A549 (cell line): ENCODE measurements at regions of chr1 and their contacts with region 1.

Region 1: GRCh38 chr1:154878371-154879022 is 8.4 kb upstream of the KCNN3 start:
- DNase-seq: peak; percentile 72 to 73
- ATAC-seq: peak; percentile 91 to 97
- H3K4me3 ChIP-seq: no peak overlapping the region
- H3K27ac ChIP-seq: peak overlapping the region; percentile 38 to 45; a peak in 1 of 6 replicates
- H3K4me1 ChIP-seq: peaks cover 17% of the 10 kb centered on the region
- CTCF ChIP-seq: peak; percentile 85
- EP300 ChIP-seq: no peak
- POLR2A ChIP-seq: no peak
- RAD21 ChIP-seq: peak; percentile 93

Region 2: GRCh38 chr1:154479764-154480421 is 398.6 kb before region 1 on chr1:
- CTCF ChIA-PET with region 1: interaction called, 22 read pairs
- POLR2A ChIA-PET with region 1: no interaction called
- DNase-seq: peak; percentile 86 to 93
- ATAC-seq: peak; percentile 95 to 99
- H3K4me3 ChIP-seq: no peak overlapping the region
- H3K27ac ChIP-seq: peak overlapping the region; percentile 48 to 67; a peak in 3 of 6 replicates
- H3K4me1 ChIP-seq: peaks cover 9% of the 10 kb centered on the region; the same call in 2 of the 3 replicates
- CTCF ChIP-seq: peak; percentile 94
- EP300 ChIP-seq: no peak
- POLR2A ChIP-seq: no peak
- RAD21 ChIP-seq: peak; percentile 95 to 97

Region 3: GRCh38 chr1:154558575-154559465 is 319.7 kb before region 1 on chr1 and contains the start of gene UBE2Q1:
- CTCF ChIA-PET with region 1: interaction called, 26 read pairs
- POLR2A ChIA-PET with region 1: interaction called, 3 read pairs
- DNase-seq: peak; percentile 92 to 99
- ATAC-seq: peak; percentile 90 to 94
- H3K4me3 ChIP-seq: peak within 1 kb of the TSS; percentile 85
- H3K27ac ChIP-seq: peak within 1 kb of the TSS; percentile 93 to 96
- H3K4me1 ChIP-seq: peaks cover 16% of the 10 kb centered on the region
- CTCF ChIP-seq: no peak
- EP300 ChIP-seq: no peak
- POLR2A ChIP-seq: peak; percentile 73
- RAD21 ChIP-seq: no peak
- polyA plus RNA-seq, gene UBE2Q1: 17.6 and 26.6 TPM in 2 replicates

Region 4: DNA sequence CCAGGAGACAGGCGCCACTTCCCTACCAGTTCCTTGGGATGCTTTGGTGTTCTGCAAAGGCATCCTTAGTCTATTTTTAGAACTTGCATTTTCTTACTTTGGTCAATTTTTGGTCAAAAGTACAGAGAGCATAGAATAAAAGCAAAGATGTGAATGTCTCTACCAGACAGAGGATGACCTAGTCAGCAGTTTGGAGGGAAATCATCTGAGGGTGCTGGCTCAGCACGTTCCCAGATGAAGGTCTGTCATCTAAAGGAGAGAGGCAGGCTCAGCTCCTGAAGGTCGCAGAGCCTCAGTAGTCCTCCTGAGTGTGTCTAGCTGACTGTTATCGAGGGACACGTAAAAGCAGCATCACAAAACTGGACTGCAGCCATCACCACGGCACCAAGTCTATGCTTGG is 295.6 kb before region 1 on chr1:
- CTCF ChIA-PET with region 1: no interaction called
- POLR2A ChIA-PET with region 1: no interaction called
- DNase-seq: no peak
- ATAC-seq: no peak
- H3K4me3 ChIP-seq: no peak overlapping the region
- H3K27ac ChIP-seq: no peak overlapping the region
- H3K4me1 ChIP-seq: no peaks in the 10 kb centered on the region
- CTCF ChIP-seq: no peak
- EP300 ChIP-seq: no peak
- POLR2A ChIP-seq: no peak
- RAD21 ChIP-seq: no peak

Region 5: DNA sequence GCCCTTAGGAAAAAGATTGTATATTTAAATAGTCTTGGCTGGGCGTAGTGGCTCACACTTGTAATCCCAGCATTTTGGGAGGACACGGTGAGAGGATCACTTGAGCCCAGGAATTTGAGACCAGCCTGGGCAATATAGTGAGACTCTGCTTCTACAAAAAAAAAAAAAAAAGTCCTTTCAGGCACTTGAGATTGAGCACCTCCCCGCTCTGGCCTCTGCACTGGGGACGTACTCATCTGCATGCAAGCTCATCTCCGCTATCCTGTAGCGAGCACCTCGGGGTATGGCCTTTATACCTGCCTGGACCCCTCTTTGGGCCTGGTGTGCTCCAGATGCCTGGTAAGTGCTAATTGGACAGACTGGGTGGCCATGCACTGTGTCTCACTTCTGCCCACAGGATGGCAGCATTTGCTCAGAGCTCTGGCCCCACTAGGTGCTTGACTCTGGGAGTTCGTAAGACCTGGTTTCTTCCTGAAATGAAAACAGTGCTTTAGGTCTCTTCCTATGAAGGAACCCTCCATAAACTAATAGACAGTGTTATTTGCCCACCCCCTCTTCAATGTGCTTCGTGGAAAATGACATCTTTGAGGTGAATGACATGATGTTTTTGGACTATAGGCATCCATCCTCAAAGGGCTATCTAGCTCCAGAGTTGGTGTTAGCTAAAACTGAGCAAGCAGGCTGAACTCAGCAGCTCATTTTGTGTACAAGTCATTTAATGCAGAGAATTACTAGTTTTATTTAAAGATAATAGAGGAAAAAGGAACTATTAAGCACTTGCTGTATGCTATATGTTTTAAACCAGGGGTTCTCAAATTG is 208.8 kb before region 1 on chr1:
- CTCF ChIA-PET with region 1: interaction called, 72 read pairs
- POLR2A ChIA-PET with region 1: interaction called, 5 read pairs
- DNase-seq: peak; percentile 85 to 88
- ATAC-seq: peak; percentile 100
- H3K4me3 ChIP-seq: no peak overlapping the region
- H3K27ac ChIP-seq: no peak overlapping the region
- H3K4me1 ChIP-seq: no peaks in the 10 kb centered on the region
- CTCF ChIP-seq: peak; percentile 87
- EP300 ChIP-seq: no peak
- POLR2A ChIP-seq: no peak
- RAD21 ChIP-seq: peak; percentile 94 to 97

Region 6: DNA sequence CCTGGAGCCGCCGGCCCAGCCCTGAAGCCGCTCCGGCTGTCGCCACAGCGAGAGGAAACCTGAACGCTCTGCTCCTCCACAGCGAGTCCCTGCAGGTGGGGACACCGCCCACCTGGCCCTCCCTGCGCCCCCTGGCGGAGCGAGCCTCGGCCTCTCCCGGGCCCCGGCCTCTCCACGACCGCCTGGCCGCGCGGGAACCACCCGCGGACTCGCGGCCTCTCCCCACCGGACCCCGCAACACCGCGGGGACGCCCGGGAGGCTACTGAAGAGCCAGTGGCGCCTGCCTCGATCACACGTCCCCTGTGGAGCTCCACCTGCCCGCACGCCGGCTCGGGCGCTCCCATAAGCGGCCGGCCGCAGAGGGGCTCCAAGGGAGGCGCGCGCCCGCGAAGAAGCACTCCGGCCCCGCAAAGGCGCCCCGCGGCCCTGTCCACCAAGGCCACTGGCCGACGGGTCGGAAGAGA is 118.0 kb before region 1 on chr1:
- CTCF ChIA-PET with region 1: interaction called, 14 read pairs
- POLR2A ChIA-PET with region 1: no interaction called
- DNase-seq: peak; percentile 44 to 72
- ATAC-seq: peak; percentile 86 to 97
- H3K4me3 ChIP-seq: peak overlapping the region; percentile 41
- H3K27ac ChIP-seq: peak overlapping the region; percentile 21 to 84; a peak in 5 of 6 replicates
- H3K4me1 ChIP-seq: 0 out of 3 replicates have a peak, but pooled peaks cover 5% of the 10 kb centered on the region
- CTCF ChIP-seq: peak; percentile 76
- EP300 ChIP-seq: no peak
- POLR2A ChIP-seq: no peak
- RAD21 ChIP-seq: peak; percentile 43 to 57; a peak in 4 of 5 replicates

Region 7: DNA sequence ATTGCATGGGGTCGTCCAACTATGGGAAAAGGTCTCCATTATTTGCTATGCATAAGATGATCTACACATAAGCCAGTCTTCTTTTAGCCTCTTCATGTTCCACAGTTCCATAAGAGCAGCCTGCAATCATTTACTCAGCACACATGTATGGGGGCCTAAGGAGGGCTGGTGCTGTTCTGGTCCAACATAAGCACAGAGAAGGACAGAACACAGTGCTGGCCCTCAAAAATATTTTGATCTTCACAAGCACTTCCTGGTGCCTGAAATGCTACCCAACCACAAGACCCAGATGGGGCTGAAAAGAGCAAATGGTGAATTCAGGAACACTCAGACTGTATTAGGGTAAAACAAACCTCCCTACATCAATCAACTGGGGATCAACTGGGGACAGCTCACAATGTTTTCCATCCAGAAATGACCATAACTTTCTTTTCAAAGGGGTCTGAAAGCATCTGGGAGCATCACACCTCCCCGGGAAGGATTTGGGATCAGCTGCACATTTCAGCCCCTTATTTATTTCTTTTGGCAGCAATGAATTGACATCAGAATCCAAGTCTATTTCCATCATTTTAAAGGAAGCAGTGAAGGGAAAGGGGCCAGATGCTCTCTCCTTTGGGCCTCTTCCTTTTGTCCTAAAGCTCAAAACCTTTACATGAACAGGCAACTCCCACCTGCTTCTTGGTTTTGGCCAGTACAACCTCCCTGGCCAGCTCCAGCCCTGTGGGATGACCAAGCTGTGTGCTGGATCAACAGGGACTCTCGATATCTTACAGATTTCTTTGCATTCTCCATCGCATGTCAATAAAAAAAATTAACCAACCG is 54.1 kb before region 1 on chr1:
- CTCF ChIA-PET with region 1: interaction called, 16 read pairs
- POLR2A ChIA-PET with region 1: no interaction called
- DNase-seq: no peak
- ATAC-seq: no peak
- H3K4me3 ChIP-seq: no peak overlapping the region
- H3K27ac ChIP-seq: no peak overlapping the region
- H3K4me1 ChIP-seq: no peaks in the 10 kb centered on the region
- CTCF ChIP-seq: no peak
- EP300 ChIP-seq: no peak
- POLR2A ChIP-seq: no peak
- RAD21 ChIP-seq: no peak

Region 8: DNA sequence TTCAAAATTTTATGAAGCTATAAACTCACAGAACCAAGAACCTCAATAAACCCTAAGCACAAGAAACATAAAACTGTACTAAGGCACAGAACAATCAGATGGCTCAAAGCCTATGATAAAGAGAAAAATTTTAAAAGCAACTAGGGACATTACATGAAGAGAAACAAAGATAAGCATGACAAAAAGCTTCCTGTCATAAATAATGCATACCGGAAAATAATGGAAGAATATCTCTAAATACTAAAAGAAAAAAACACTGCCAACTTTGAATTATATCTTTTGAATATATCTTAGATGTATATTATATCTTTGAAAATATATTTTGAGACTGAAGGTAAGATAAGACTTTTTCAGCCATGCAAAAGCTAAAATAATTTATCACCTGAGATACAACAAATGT is 13.0 kb after region 1 on chr1:
- CTCF ChIA-PET with region 1: interaction called, 31 read pairs
- POLR2A ChIA-PET with region 1: no interaction called
- DNase-seq: no peak
- ATAC-seq: no peak
- H3K4me3 ChIP-seq: no peak overlapping the region
- H3K27ac ChIP-seq: no peak overlapping the region
- H3K4me1 ChIP-seq: no peaks in the 10 kb centered on the region
- CTCF ChIP-seq: no peak
- EP300 ChIP-seq: no peak
- POLR2A ChIP-seq: no peak
- RAD21 ChIP-seq: no peak

Region 9: DNA sequence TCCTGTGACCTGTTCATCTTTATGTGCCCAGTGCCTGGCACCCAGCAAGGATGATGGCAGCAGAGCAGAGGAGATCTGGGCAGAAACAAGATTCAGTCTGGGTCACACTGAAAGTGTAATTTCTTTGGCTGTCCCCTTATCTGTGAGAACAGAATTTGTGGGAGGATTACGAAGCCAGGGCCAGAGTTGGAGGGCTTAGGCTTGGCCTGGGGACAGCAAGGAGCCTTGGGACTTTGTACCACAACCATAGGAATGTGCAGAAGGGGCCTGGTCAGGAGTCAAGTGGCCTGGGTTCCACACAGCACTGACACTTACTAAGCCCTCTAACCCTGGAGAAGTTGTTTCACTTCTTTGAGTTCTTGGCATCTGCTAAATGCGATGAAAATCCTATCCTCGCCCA is 45.2 kb after region 1 on chr1:
- CTCF ChIA-PET with region 1: no interaction called
- POLR2A ChIA-PET with region 1: no interaction called
- DNase-seq: no peak
- ATAC-seq: no peak
- H3K4me3 ChIP-seq: no peak overlapping the region
- H3K27ac ChIP-seq: no peak overlapping the region
- H3K4me1 ChIP-seq: no peaks in the 10 kb centered on the region
- CTCF ChIP-seq: no peak
- EP300 ChIP-seq: no peak
- POLR2A ChIP-seq: no peak
- RAD21 ChIP-seq: no peak